Calu3 (cell line): ENCODE measurements at regions of chr19 and their contacts with region 1.

Region 1: GRCh38 chr19:27966390-27966816 is 1246.5 kb downstream of the UQCRFS1 start:
- DNase-seq: no peak
- H3K4me3 Mint-ChIP-seq: no peak overlapping the region
- H3K27ac Mint-ChIP-seq: no peak overlapping the region
- H3K4me1 Mint-ChIP-seq: peaks cover 2% of the 10 kb centered on the region
- H3K27me3 Mint-ChIP-seq: no peaks in the 10 kb centered on the region
- CTCF ChIP-seq: no peak

Region 2: GRCh38 chr19:28324275-28325060 is 358.1 kb after region 1 on chr19:
- CTCF ChIA-PET with region 1: no interaction called
- intact Hi-C with region 1: loop called (anchors 2 kb)
- DNase-seq: no peak
- H3K4me3 Mint-ChIP-seq: no peak overlapping the region
- H3K27ac Mint-ChIP-seq: no peak overlapping the region
- H3K4me1 Mint-ChIP-seq: no peaks in the 10 kb centered on the region
- H3K27me3 Mint-ChIP-seq: no peaks in the 10 kb centered on the region
- CTCF ChIP-seq: no peak

Region 3: GRCh38 chr19:28878862-28879566 is 912.6 kb after region 1 on chr19:
- CTCF ChIA-PET with region 1: no interaction called
- intact Hi-C with region 1: loop called (anchors 5 kb)
- DNase-seq: peak; percentile 74
- H3K4me3 Mint-ChIP-seq: no peak overlapping the region
- H3K27ac Mint-ChIP-seq: no peak overlapping the region
- H3K4me1 Mint-ChIP-seq: peaks cover 10% of the 10 kb centered on the region
- H3K27me3 Mint-ChIP-seq: no peaks in the 10 kb centered on the region
- CTCF ChIP-seq: peak; percentile 74